ENCODE measurements at regions of chr17 and their contacts with region 1.

Region 1: DNA sequence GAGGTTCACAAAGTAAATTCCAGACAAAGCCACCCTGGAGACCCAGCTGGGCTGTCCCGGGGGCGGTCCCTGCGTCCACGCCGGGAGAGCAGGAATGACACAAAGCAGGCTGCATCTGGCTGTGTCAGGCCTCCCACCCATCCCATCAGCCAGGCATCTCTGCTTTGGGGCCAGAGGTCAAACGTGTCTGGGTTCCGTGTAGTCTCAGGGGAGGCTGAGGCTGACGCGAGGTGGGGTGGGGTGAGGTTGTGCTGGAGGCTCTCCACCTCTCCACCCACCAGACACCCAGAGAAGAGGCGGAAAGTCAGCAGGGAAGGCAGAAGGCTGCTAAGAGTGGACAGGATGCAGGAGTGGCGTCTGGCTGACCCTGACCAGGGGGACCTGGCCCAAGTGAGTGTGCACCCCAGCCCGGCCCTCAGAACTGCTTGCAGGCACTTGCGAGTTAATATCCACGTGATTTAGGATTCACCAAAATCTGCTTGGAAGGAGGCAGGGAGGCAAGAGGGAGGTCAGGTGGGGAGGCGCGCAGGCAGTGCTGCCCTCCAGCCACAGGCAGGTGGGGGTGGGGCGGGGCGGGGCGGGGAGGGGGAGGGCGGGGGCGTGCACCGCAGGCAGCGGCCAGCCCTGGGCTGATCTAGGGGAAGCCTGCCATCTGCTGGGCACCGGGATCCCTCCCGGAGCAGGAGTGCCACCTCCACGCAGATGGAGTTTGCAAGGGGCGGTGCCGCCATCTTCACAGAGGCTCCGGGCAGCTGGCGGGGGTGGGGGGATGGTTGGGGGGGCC is 44.3 kb downstream of the TBC1D16 start:
- DNase-seq: peak; percentile 77
- H3K4me3 ChIP-seq: peak overlapping the region; percentile 37
- CTCF ChIP-seq: peak; percentile 63

Region 2: DNA sequence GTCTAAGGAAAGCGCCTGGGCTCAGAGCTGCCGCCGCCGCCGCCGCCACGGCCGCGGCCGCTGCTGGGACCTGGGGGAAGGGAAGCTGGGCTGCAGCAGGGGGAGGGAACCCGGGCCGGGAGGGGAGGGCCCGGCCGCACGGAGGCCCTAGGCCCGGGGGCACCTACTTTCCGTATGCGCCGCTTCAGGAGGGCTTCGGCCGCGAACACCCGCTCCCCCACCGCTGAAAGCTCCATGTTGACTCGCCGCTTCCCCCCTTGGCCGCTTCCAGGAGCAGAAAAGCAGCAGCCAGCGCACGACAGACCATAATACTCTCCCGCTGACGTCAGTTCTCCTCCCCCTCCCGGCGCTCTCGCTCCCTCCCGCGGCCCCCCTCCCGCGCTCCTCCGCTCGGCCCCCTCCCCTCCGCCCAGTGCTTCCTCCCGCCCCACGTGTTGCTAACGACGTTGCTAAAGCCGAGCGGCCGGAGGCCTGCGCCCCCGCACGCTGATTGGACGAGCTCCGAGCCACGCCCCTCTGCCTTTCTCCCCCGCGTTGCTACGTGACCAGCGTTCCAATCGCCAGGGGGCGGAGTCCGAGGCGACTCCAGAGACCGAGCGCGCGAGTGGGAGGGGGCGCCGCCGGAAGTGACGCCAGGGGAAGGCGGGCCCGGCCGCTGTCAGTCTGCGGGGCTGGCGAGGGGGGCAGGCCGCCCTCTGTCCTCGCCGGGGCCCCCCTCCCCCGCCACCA is 194.4 kb before region 1 on chr17 and contains the start of gene CBX8:
- in situ Hi-C with region 1: loop called (anchors 25 kb)
- DNase-seq: peak; percentile 100
- H3K4me3 ChIP-seq: peak within 1 kb of the TSS; percentile 72
- CTCF ChIP-seq: no peak

Measured in astrocyte of the spinal cord (primary cell).